ENCODE measurements at regions of chr1 and their contacts with region 1.

Region 1: GRCh38 chr1:205750138-205751035 is at the start of gene NUCKS1:
- DNase-seq: peak; percentile 99
- H3K4me3 Mint-ChIP-seq: peak within 1 kb of the TSS; percentile 85
- H3K27ac Mint-ChIP-seq: peak within 1 kb of the TSS; percentile 96
- H3K4me1 Mint-ChIP-seq: peaks cover 27% of the 10 kb centered on the region
- H3K27me3 Mint-ChIP-seq: peaks cover 4% of the 10 kb centered on the region
- total RNA-seq, gene NUCKS1: 161 and 188 TPM in 2 replicates

Region 2: GRCh38 chr1:204411451-204412204 is 1338.8 kb before region 1 on chr1 and contains the start of gene PPP1R15B:
- intact Hi-C with region 1: loop called (anchors 5 kb)
- DNase-seq: peak; percentile 99
- H3K4me3 Mint-ChIP-seq: peak within 1 kb of the TSS; percentile 97
- H3K27ac Mint-ChIP-seq: peak within 1 kb of the TSS; percentile 99
- H3K4me1 Mint-ChIP-seq: peaks cover 9% of the 10 kb centered on the region
- H3K27me3 Mint-ChIP-seq: no peaks in the 10 kb centered on the region
- total RNA-seq, gene PPP1R15B: 70.9 and 74.0 TPM in 2 replicates

Region 3: GRCh38 chr1:205658943-205659581 is 91.3 kb before region 1 on chr1:
- intact Hi-C with region 1: no loop called
- DNase-seq: peak; percentile 94
- H3K4me3 Mint-ChIP-seq: no peak overlapping the region
- H3K27ac Mint-ChIP-seq: no peak overlapping the region
- H3K4me1 Mint-ChIP-seq: peaks cover 2% of the 10 kb centered on the region
- H3K27me3 Mint-ChIP-seq: peaks cover 11% of the 10 kb centered on the region

Region 4: DNA sequence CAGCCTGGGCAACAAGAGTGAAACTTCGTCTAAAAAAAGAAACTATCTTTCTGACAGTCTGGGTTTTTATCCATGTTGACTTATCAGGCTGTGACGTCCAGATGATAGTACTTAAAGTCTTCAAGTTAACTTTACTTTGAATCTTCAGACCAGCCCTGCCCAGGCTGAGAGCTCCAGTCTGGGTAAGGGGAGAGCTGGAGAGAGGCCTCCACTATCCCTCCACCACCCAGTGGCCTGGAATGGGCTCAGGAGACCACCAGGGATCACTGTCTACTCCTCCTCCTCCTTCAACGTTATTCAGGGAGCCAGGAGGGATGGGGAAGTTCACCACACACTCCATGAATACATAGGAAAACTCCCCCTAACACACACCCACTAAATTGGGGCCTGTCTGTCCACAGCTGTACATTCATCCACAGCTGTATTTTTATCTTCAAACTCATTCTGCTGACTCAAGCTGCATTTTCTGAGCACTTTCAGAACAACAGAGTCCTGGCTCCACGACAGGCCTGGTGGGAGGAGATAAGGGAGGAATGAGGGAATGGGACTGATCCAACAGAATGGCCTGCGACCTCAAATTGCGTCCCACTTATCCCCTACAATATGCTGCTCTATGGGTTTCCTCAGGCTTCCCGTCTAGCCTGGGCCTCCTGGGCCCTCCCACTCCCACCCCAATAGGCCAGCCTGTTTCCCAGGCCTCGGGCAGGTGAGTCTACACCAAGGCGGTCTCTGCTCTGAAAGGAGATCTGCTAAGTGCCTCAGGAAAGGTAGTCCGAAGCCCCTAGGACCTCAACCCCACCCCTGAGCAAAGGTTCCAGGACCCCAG is 71.9 kb before region 1 on chr1:
- intact Hi-C with region 1: loop called (anchors 5 kb)
- DNase-seq: no peak
- H3K4me3 Mint-ChIP-seq: no peak overlapping the region
- H3K27ac Mint-ChIP-seq: no peak overlapping the region
- H3K4me1 Mint-ChIP-seq: peaks cover 9% of the 10 kb centered on the region
- H3K27me3 Mint-ChIP-seq: peaks cover 29% of the 10 kb centered on the region

Region 5: DNA sequence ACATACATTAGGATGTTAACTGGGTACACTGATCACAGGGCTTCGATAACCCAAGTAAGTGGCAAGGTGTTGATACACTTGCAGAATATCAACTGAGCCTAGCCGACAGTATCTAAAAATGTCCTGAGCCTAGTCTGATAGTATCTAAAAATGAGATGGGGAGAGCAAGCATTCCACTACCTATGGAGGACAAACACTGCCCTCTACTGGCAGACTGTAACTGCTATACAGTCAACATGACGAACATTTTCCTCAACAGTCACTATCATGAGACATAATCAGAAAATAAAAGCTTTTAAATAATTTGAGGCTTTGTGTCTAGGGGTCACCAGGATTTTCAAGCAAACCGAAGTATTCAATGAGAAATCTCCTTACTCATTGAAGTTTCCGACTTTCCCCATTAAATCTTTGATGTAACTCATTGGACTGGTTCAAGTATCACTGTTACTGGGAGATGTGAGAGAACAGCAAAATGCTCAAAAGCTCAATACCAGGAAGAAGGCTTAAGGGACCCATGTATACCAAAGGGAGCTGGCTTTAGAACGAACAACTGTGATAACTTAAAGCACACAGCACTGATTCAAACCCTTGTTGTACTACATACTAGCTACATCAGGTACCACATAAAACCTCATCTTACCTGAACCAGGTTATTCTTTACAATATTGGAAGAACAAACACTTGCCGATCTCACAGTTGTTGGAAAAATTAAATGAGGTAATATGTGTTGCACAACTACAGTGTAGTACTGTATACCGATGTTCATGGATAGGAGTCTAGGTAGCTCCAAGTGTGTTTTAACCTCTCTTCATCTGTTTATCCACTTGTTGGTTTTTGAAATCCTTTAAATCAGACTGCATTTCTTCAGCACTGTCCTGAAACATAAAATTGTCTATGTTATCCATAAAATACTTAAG is 39.0 kb before region 1 on chr1:
- intact Hi-C with region 1: loop called (anchors 2 kb)
- DNase-seq: peak; percentile 90
- H3K4me3 Mint-ChIP-seq: no peak overlapping the region
- H3K27ac Mint-ChIP-seq: peak overlapping the region; percentile 44
- H3K4me1 Mint-ChIP-seq: peaks cover 19% of the 10 kb centered on the region
- H3K27me3 Mint-ChIP-seq: no peaks in the 10 kb centered on the region

Region 6: DNA sequence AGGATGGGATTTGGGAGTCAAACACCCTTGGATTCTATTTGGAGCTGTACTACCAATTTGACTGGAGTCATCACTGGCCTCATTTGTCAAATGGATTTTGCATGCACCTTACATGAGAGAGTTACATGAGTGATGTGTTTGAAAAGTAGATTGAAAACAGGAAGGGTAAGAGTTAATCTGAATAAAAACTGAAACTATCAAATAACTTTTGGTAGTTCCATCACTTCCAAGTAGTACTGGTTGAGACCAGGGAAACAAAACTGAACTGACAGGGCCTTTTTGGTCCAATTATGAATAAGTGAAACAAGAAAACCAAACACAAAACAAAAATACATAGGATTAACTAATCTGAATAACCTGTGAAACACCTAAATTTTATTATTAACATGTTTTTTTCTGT is 30.6 kb before region 1 on chr1:
- intact Hi-C with region 1: loop called (anchors 1 kb)
- DNase-seq: no peak
- H3K4me3 Mint-ChIP-seq: peak overlapping the region; percentile 49
- H3K27ac Mint-ChIP-seq: peak overlapping the region; percentile 88
- H3K4me1 Mint-ChIP-seq: peaks cover 27% of the 10 kb centered on the region
- H3K27me3 Mint-ChIP-seq: no peaks in the 10 kb centered on the region

Region 7: DNA sequence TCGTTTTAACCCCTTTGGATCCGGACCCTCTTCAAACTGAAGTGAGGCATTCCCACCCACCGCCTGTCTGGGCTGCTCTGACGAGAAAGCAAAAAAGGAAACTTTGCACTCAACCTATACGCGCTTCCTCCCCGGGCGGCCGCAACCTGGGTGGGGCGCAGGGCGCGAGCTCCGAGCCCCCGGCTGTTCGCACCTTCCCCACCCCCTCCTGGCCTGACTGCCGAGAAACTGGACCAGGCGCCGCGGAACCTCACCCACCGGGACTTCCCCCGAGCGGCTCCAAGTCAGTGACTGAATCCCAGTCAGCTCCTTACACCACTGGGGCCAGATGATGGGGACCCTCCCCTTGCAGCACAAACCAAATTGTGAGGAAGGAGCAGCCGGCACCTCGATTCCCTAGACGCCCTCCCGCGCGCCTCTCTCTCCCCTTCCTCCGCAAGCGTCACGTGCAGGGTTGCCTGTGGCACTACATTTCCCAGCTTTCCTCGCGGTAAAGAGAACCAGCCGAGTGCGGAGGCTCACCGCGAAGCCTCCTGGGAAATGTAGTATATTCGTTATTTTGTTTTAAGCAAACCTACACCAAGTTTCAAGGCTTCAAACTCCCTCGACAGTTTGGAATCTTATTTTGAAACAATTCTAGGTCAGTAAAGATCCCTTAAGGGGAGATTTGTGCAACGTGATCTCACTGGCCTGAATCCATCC is 24.8 kb after region 1 on chr1 and contains the start of gene RAB29:
- intact Hi-C with region 1: loop called (anchors 1 kb)
- DNase-seq: peak; percentile 96
- H3K4me3 Mint-ChIP-seq: peak within 1 kb of the TSS; percentile 96
- H3K27ac Mint-ChIP-seq: peak within 1 kb of the TSS; percentile 95
- H3K4me1 Mint-ChIP-seq: peaks cover 51% of the 10 kb centered on the region
- H3K27me3 Mint-ChIP-seq: no peaks in the 10 kb centered on the region
- total RNA-seq, gene RAB29: 27.8 and 29.1 TPM in 2 replicates

Region 8: DNA sequence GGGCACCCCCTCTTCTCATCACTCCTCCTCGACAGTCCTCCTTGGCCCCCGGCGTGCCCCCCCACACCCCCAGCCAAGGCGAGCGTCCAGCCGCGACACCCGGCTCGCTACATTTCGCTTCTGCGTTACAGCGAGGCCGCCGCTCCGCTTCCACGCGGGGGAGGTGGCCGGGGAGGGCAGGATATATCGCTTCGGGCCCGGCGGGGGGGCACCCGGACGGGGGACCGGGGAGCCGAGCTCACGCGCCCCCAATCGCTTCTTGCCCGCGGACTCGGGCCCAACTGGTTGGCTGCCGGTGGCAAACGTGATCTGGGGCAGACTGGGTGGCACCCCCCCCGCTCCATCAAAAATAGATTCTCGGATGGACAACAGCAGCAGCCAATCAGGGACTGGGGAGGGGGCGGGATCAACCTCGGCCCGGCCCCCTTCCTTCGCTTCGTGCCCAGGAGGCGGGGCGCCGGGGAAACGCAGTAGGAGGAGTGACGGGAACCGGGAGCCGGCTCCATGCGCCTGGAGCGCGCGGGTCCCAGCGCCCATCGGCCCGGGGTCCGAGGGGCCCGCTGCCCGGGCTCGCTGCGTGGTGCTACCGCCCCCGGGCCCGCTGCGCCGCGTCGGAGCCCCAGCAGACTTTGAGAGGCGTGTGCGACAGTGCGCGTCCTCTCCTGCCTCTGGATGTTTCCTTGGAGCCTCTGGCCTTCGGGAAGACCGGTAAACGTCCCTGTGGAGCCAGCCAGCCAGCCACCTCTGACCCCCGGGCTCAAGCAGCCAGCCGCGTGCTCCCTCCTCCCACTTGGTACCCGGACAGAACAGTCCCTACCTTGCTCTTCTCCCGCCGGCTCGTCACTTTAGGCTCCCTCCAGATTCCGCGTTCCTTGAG is 62.7 kb after region 1 on chr1 and contains the start of gene SLC41A1:
- intact Hi-C with region 1: loop called (anchors 1 kb)
- DNase-seq: peak; percentile 95
- H3K4me3 Mint-ChIP-seq: peak within 1 kb of the TSS; percentile 95
- H3K27ac Mint-ChIP-seq: peak within 1 kb of the TSS; percentile 86
- H3K4me1 Mint-ChIP-seq: peaks cover 37% of the 10 kb centered on the region
- H3K27me3 Mint-ChIP-seq: peaks cover 9% of the 10 kb centered on the region
- total RNA-seq, gene SLC41A1: 29.5 and 30.1 TPM in 2 replicates

Region 9: GRCh38 chr1:206865013-206865671 is 1114.8 kb after region 1 on chr1 and contains the start of gene IL20:
- intact Hi-C with region 1: no loop called
- DNase-seq: peak; percentile 95
- H3K4me3 Mint-ChIP-seq: no peak within 1 kb of the TSS
- H3K27ac Mint-ChIP-seq: peak within 1 kb of the TSS; percentile 32
- H3K4me1 Mint-ChIP-seq: peaks cover 9% of the 10 kb centered on the region
- H3K27me3 Mint-ChIP-seq: peaks cover 30% of the 10 kb centered on the region
- total RNA-seq, gene IL20: not detected in 2 replicates